CD14-positive monocyte (primary cell): ENCODE measurements at regions of chr20 and their contacts with region 1.

Region 1: DNA sequence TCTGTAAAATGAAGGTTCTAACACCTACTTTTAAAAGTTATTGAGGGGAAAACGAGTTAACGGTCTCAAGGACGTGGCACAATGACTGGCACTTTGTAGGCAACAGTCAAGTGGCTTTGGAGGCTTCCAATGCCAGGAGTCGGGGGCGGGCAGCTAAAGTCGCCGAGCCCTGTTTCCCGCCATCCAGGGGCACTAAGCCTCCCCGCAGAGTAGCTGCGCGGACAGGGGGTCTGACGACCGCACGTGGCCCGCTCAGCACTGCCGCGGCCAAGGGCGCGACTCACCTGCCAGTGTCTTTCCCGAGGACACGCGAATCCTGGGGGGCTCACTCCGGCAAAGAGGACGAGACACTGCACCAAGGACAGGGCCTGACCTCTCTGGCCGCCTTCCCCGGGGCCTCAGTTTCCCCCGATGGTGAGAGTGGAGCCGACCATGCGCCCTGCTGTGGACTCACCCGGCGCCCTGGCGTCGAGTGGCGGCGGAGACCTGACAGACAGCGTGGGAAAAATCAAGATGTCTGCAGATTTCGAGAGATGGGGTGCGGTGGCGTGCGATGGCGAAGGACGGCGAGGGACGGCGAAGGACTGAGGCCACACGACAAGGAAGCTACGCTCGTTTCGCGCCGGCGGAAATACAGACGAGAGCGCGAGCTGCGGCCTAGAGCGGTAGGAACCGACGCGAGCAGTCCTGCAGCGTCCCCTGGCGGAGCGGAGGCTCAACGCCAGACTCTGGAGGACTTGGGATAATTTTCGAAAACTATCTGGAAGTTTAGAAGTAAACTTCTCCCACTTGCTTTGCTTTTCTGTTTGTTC is at the start of gene SNHG17:
- DNase-seq: peak; percentile 92 to 96 (median 93)
- H3K4me3 ChIP-seq: peak within 1 kb of the TSS; percentile 69 to 82 (median 75)
- H3K4me3 Mint-ChIP-seq: peak within 1 kb of the TSS; percentile 94 to 96
- H3K27ac ChIP-seq: peak within 1 kb of the TSS; percentile 85 to 88
- H3K27ac Mint-ChIP-seq: peak within 1 kb of the TSS; percentile 85 to 94 (median 93)
- H3K4me1 ChIP-seq: peaks cover 16 to 20% of the 10 kb centered on the region in 2 donors
- H3K4me1 Mint-ChIP-seq: peaks cover 18% of the 10 kb centered on the region
- H3K27me3 ChIP-seq: no peaks in the 10 kb centered on the region
- H3K27me3 Mint-ChIP-seq: peaks cover 3 to 11% (median 9%) of the 10 kb centered on the region in 3 donors
- CTCF ChIP-seq: peak; percentile 100
- polyA plus RNA-seq, gene SNHG17: 10.1 to 32.4 (median 29.2) TPM

Region 2: DNA sequence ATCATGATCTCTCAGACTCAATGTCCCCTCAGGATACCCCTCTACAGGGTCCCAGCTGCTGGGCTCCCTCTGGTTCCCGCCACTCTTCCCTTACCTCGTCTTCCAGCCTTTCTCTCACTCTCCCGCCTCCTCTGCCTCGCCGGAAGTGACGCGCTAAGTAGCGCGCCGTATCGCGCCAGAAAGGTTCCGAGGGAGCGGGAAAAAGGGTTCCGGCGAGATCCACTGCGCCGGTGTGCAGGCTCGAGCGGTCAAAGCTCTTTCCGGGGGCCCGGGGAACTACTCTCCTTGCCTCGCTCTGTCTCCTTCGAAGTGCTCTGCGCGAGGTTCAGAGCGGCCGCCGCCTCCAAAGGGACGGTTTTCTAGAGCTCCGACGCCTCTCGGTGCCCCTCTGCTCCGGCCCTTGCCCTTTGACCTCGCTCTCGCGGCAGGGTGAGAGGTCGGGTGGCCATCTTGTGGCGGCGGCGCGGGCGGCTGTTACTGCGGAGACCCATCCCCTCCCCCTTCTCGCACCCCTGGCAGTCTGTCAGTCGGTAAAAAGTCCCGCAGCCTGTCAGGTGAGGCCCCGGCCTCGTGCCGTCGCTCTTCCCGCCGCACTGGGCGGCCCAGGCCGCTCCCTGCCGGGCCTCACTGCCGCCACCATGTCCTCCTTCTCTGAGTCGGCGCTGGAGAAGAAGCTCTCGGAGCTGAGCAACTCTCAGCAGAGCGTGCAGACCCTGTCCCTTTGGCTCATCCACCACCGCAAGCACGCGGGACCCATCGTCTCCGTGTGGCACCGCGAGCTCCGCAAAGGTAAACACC is 401.4 kb before region 1 on chr20 and contains the starts of genes RPRD1B and TTI1:
- intact Hi-C with region 1: loop called in 1 of 2 experiments (anchors 10 kb)
- DNase-seq: peak; percentile 82 to 90 (median 86)
- H3K4me3 ChIP-seq: peak within 1 kb of the TSS; percentile 64 to 93 (median 85)
- H3K4me3 Mint-ChIP-seq: peak within 1 kb of the TSS; percentile 94 to 95
- H3K27ac ChIP-seq: peak within 1 kb of the TSS; percentile 79 to 99
- H3K27ac Mint-ChIP-seq: peak within 1 kb of the TSS; percentile 95 to 100 (median 100)
- H3K4me1 ChIP-seq: peaks cover 30 to 41% of the 10 kb centered on the region in 2 donors
- H3K4me1 Mint-ChIP-seq: peaks cover 55% of the 10 kb centered on the region
- H3K27me3 ChIP-seq: no peaks in the 10 kb centered on the region
- H3K27me3 Mint-ChIP-seq: peaks cover 0 to 1% (median 0%) of the 10 kb centered on the region in 3 donors
- CTCF ChIP-seq: no peak
- polyA plus RNA-seq, gene RPRD1B: 3.6 to 12.3 (median 4.7) TPM
- polyA plus RNA-seq, gene TTI1: 6.4 to 9.1 (median 8.8) TPM

Region 3: DNA sequence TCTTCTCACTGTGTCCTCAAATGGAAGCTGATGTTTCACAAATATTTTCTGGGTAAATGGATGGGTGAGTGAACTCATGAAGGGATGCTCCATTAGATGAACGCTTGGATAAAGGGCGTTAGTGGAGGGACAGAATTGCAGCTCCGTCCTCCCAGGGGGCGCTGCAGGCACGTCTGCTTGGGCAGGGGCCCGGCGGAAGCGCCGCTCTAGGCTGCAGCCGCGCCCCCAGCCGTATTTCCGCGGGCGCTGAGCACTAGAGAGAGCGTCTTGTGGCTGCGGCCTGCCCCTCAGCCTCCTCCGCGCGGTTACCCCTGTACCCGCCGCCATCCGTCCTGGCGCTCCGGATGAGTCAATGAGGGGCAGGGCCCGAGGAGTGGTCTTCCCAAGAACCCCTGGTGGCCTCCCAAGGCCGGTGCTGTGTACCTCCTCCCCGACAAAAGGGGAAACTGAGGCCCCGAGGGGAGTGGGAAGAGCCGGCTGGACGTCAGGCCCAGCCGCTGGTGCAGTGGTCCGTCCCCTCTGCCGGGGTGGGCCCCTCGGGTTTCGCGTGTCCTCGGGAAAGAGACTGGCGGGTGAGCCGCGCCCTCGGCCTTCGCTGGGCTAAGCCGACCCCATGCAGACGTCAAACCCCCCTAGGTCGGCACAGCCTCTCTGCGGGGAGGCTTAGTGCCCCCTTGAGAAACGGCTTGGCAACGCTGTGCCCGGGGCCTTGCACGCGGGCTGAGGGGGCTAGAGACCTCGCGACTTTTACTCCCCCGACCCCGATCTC is 11.7 kb after region 1 on chr20:
- intact Hi-C with region 1: loop called (anchors 1 kb)
- DNase-seq: peak; percentile 88 to 91 (median 89)
- H3K4me3 ChIP-seq: peak overlapping the region; percentile 61 to 99 (median 86)
- H3K4me3 Mint-ChIP-seq: peak overlapping the region; percentile 79 to 84
- H3K27ac ChIP-seq: peak overlapping the region; percentile 74 to 88
- H3K27ac Mint-ChIP-seq: peak overlapping the region; percentile 60 to 87 (median 67)
- H3K4me1 ChIP-seq: peaks cover 24 to 26% of the 10 kb centered on the region in 2 donors
- H3K4me1 Mint-ChIP-seq: peaks cover 22% of the 10 kb centered on the region
- H3K27me3 ChIP-seq: peaks cover 0 to 4% of the 10 kb centered on the region in 2 donors
- H3K27me3 Mint-ChIP-seq: peaks cover 5 to 11% (median 9%) of the 10 kb centered on the region in 3 donors
- CTCF ChIP-seq: peak; percentile 99

Region 4: GRCh38 chr20:38472513-38473372 is 37.8 kb after region 1 on chr20 and contains the start of gene RALGAPB:
- intact Hi-C with region 1: loop called (anchors 5 kb)
- DNase-seq: peak; percentile 97 to 100 (median 98)
- H3K4me3 ChIP-seq: peak within 1 kb of the TSS; percentile 61 to 86 (median 75)
- H3K4me3 Mint-ChIP-seq: peak within 1 kb of the TSS; percentile 89 to 94
- H3K27ac ChIP-seq: peak within 1 kb of the TSS; percentile 50 to 79
- H3K27ac Mint-ChIP-seq: peak within 1 kb of the TSS; percentile 75 to 91 (median 89)
- H3K4me1 ChIP-seq: peaks cover 21 to 23% of the 10 kb centered on the region in 2 donors
- H3K4me1 Mint-ChIP-seq: peaks cover 31% of the 10 kb centered on the region
- H3K27me3 ChIP-seq: no peaks in the 10 kb centered on the region
- H3K27me3 Mint-ChIP-seq: peaks cover 0 to 5% (median 3%) of the 10 kb centered on the region in 3 donors
- CTCF ChIP-seq: peak; percentile 44
- polyA plus RNA-seq, gene RALGAPB: 4.7 to 15.5 (median 6.1) TPM

Region 5: GRCh38 chr20:38559764-38560163 is 124.8 kb after region 1 on chr20:
- intact Hi-C with region 1: no loop called
- DNase-seq: no peak
- H3K4me3 ChIP-seq: no peak overlapping the region
- H3K4me3 Mint-ChIP-seq: no peak overlapping the region
- H3K27ac ChIP-seq: no peak overlapping the region
- H3K27ac Mint-ChIP-seq: no peak overlapping the region
- H3K4me1 ChIP-seq: no peaks in the 10 kb centered on the region
- H3K4me1 Mint-ChIP-seq: no peaks in the 10 kb centered on the region
- H3K27me3 ChIP-seq: no peaks in the 10 kb centered on the region
- H3K27me3 Mint-ChIP-seq: no peaks in the 10 kb centered on the region
- CTCF ChIP-seq: no peak